ENCODE measurements at regions of chr5 and their contacts with region 1.

Region 1: GRCh38 chr5:91183737-91184136 is 199.4 kb downstream of the ARRDC3 start:
- DNase-seq: no peak
- ATAC-seq: no peak
- H3K4me3 ChIP-seq: no peak overlapping the region
- H3K27ac ChIP-seq: no peak overlapping the region
- H3K4me1 ChIP-seq: no peaks in the 10 kb centered on the region
- H3K27me3 ChIP-seq: no peaks in the 10 kb centered on the region
- CTCF ChIP-seq: no peak

Region 2: GRCh38 chr5:91125916-91126315 is 57.8 kb before region 1 on chr5:
- CTCF ChIA-PET with region 1: no interaction called
- POLR2A ChIA-PET with region 1: no interaction called
- in situ Hi-C with region 1: no loop called
- intact Hi-C with region 1: loop called (anchors 2 kb)
- DNase-seq: no peak
- ATAC-seq: no peak
- H3K4me3 ChIP-seq: no peak overlapping the region
- H3K27ac ChIP-seq: no peak overlapping the region
- H3K4me1 ChIP-seq: no peaks in the 10 kb centered on the region
- H3K27me3 ChIP-seq: no peaks in the 10 kb centered on the region
- CTCF ChIP-seq: no peak

Region 3: DNA sequence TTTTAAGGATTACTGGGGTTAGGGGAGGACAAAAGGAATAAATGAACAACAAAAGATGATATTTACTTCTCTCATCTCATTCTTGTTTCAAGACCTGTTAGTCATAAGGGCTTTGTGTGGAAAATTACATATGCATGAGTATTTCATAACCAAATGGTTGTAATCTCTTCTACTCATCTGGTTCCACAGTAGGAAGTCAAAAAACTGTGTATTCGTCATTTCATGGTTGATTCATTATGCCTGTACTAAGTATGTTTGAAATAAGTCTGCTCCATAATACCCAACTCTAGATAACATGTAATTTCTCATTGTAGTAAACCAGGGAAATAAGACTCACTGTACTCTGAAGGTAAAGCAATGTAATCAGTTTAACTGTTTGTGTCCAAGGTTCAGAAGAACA is 13.5 kb before region 1 on chr5:
- CTCF ChIA-PET with region 1: no interaction called
- POLR2A ChIA-PET with region 1: no interaction called
- in situ Hi-C with region 1: no loop called
- intact Hi-C with region 1: no loop called
- DNase-seq: no peak
- ATAC-seq: no peak
- H3K4me3 ChIP-seq: no peak overlapping the region
- H3K27ac ChIP-seq: no peak overlapping the region
- H3K4me1 ChIP-seq: no peaks in the 10 kb centered on the region
- H3K27me3 ChIP-seq: no peaks in the 10 kb centered on the region
- CTCF ChIP-seq: no peak